Activated CD4-positive, alpha-beta memory T cell treated with anti-CD3 and anti-CD28 coated beads for 36 hours (primary cell): ENCODE measurements at regions of chr2 and their contacts with region 1.

Region 1: DNA sequence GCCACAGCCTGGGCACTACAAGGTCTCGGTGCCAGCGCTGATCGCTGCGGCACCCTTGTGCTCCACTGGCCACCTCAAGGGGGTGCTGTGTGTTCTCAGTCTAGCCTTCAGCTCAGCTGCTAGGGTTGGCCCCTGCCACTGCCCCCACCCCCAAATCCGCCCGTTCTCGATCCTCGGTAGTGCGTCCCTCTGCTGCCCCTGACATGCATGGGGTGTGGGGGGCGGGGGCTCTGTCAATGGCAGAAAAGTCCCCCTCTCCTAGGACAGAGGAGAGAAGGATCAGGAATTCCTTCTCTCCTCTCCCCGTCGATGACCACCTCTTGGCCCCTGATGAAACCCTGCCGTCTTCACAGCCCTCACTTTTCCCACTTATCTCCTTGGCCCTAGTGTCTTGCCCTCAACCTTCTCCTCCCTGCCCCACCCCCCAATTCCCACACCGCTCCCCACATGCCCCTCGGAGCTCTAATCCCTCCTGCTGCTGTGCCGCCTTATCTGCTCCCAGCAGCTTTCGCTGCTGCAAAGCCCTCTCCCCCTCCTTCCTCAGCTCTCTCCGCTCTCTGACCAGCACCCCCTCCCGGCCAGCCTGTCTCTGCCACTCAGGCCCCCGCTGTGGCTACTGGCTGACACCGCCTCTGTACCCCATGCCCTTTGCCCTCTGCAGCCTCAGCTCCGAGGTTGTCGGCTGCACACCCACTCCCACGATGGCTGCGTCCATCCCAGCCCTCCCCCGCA is 4.3 kb upstream of the ASIC4 start:
- DNase-seq: peak; percentile 65
- H3K4me3 Mint-ChIP-seq: no peak overlapping the region
- H3K27ac Mint-ChIP-seq: no peak overlapping the region
- H3K4me1 Mint-ChIP-seq: peaks cover 25% of the 10 kb centered on the region
- H3K27me3 Mint-ChIP-seq: peaks cover 46% of the 10 kb centered on the region

Region 2: DNA sequence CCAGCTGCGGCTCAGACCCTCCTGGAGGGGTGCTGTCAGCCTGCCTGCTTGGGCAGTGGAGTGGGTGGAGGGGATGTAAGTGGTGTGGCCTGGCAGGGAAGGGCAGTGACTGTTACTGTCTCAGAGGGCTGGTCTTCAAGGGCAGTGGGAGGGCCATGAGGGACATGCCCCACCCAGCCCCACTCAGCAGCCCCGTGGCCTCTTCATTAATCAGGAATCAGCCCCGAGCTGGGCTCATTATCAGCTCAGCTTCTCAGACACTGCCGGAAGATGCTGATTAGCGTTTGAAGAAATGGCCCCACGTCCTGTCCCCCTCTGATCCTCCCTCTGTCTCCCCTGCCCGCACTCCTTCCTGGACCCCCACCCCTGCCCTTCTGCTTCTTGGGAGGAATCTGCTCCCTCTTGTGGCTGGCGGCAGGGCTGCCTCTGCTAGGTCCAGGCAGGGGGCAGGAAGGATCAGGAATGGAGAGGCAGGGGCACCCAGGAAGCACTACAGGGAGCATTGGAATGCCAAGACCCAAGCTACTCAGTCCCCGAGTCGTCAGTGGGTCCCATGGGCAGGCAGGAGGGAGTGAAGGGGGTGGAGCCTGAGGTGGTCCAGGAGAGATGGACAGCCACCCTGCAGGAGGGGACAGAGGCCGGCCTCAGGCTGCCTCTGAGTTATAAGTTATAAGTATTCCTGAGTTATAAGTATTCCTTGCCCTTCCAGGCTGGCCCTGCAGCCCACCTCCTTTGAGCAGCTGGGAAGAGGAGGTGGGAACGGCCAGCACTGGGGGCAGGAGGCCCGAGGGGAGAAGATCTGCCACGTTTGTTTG is 11.3 kb after region 1 on chr2:
- CTCF ChIA-PET with region 1: interaction called, 69 read pairs
- POLR2A ChIA-PET with region 1: no interaction called
- intact Hi-C with region 1: no loop called
- DNase-seq: no peak
- H3K4me3 Mint-ChIP-seq: no peak overlapping the region
- H3K27ac Mint-ChIP-seq: no peak overlapping the region
- H3K4me1 Mint-ChIP-seq: peaks cover 10% of the 10 kb centered on the region
- H3K27me3 Mint-ChIP-seq: peaks cover 73% of the 10 kb centered on the region